Heart right ventricle (tissue), 16 donors: ENCODE measurements at regions of chr3 and their contacts with region 1.

Region 1: DNA sequence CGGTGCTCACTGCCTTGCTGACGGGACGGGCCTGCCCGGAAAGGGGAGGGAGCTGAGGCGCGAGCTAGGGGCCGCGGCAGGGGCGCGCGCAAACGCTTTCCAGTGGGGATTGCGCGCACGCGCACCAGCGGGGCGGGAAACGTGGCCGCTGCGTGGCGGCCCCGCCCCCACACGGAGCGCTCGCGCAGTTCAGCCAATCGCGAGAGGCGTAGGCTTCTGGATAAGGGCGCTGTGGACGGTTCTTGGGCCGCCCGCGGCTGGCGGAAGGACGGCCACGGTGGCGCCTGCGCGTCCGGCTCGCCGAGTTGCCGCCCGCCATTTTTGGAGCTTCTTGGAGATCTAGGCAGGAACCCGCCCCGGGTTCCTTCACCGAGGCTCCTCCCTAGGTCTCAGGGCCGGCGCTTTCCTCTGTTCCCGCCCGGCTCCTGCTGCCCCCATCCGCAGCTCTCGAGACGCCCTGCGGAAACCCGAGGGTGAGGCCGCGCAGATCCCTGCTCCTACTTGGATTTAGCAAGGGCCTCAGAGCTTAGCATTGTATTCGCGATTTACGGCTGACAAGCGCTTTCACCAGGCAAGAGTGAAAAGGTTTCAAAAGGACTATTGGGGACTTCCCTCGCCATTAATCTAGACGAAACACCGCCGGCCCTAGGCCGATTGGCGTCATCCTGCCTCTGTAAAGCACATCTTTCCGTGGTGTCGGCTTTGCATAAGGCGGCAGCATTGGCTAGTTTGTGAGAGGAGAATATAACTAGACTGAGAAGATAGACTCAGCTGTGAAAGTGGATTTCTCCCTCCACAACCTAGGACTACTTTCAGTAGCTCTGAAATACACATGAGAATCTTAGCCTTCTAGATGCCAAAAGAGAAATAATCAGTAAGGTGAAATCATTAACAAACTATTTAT is 496 bp upstream of the STAG1 start:
- DNase-seq: peak; percentile 98 to 99
- ATAC-seq: peak; percentile 94 to 99 (median 96)
- H3K4me3 ChIP-seq: peak overlapping the region; percentile 33 to 94 (median 71)
- H3K27ac ChIP-seq: peak overlapping the region; percentile 96 to 99 (median 98)
- H3K4me1 ChIP-seq: peaks cover 4 to 40% (median 30%) of the 10 kb centered on the region in 9 donors
- H3K27me3 ChIP-seq: no peaks in the 10 kb centered on the region
- CTCF ChIP-seq: peak in 4 of 9 donors; percentile 20 to 54 (median 46)

Region 2: DNA sequence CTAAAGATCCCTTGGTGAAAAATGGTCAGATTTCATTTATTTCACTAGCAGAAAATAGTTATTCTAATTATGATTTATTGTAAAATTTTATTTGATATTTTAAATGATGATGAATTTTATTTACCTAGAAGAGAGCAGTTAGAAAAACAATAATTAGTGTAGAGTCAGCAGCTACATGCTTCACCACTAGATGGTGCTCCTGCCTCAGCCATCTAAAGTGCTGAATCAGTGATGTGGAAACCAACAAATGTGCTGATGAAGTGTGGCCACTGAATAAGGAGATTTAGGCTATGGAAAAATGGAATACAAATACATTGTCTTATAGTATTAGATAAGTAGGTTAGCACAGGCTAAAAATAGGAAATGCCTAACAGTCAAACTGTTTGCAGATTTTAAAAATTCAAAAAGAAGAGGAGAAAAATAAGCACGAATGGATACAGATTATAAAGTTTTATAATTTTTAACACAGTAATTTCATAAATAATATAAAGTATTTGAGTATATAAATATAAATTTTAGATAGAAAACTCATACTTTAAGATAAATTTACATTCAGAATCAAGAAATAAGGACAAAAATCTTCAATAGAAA is 677.4 kb before region 1 on chr3:
- intact Hi-C with region 1: loop called in 9 of 10 experiments (anchors 1 to 10 kb)
- DNase-seq: peak; percentile 30 to 77
- ATAC-seq: peak; percentile 71 to 87 (median 80)
- H3K4me3 ChIP-seq: no peak overlapping the region
- H3K27ac ChIP-seq: peak overlapping the region in 7 of 10 donors; percentile 6 to 54 (median 34)
- H3K4me1 ChIP-seq: peaks cover 2 to 39% (median 20%) of the 10 kb centered on the region in 9 donors
- H3K27me3 ChIP-seq: no peaks in the 10 kb centered on the region
- CTCF ChIP-seq: peak; percentile 84 to 97 (median 92)

Region 3: GRCh38 chr3:136305878-136306277 is 446.8 kb before region 1 on chr3:
- intact Hi-C with region 1: loop called in 1 of 10 experiments (anchors 5 kb)
- DNase-seq: no peak
- ATAC-seq: no peak
- H3K4me3 ChIP-seq: no peak overlapping the region
- H3K27ac ChIP-seq: no peak overlapping the region
- H3K4me1 ChIP-seq: no peaks in the 10 kb centered on the region
- H3K27me3 ChIP-seq: no peaks in the 10 kb centered on the region
- CTCF ChIP-seq: peak in 4 of 9 donors; percentile 22 to 46 (median 28)

Region 4: GRCh38 chr3:136396916-136397315 is 355.8 kb before region 1 on chr3:
- intact Hi-C with region 1: loop called in 5 of 10 experiments (anchors 5 to 10 kb)
- DNase-seq: no peak
- ATAC-seq: no peak
- H3K4me3 ChIP-seq: no peak overlapping the region
- H3K27ac ChIP-seq: no peak overlapping the region
- H3K4me1 ChIP-seq: peaks cover 0 to 3% (median 0%) of the 10 kb centered on the region in 9 donors
- H3K27me3 ChIP-seq: no peaks in the 10 kb centered on the region
- CTCF ChIP-seq: no peak

Region 5: DNA sequence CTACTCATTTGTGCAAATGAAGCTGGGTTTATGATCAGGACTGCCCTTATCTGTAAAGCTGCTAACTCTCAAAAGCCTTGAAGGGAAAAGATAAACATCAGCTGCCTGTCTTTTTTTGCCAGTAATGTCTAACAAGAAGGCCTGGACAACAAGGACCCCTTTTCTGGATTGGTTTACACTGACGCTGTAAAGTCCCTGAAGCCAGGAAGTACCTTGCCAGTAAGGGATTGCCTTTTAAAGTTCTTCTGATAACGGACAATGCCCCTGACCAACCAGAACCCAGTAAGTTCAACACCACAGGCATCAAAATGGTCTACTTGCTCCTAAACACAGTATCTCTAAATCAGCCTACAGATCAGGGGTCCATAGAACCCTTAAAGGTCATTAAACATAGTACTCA is 324.5 kb before region 1 on chr3:
- intact Hi-C with region 1: no loop called
- DNase-seq: no peak
- ATAC-seq: no peak
- H3K4me3 ChIP-seq: no peak overlapping the region
- H3K27ac ChIP-seq: no peak overlapping the region
- H3K4me1 ChIP-seq: no peaks in the 10 kb centered on the region
- H3K27me3 ChIP-seq: no peaks in the 10 kb centered on the region
- CTCF ChIP-seq: no peak

Region 6: GRCh38 chr3:136861890-136862616 is 109.4 kb after region 1 on chr3 and contains the start of gene NCK1:
- intact Hi-C with region 1: loop called in 5 of 10 experiments (anchors 1 to 5 kb)
- DNase-seq: peak; percentile 98 to 99
- ATAC-seq: peak; percentile 98 to 100 (median 99)
- H3K4me3 ChIP-seq: peak within 1 kb of the TSS; percentile 58 to 98 (median 93)
- H3K27ac ChIP-seq: peak within 1 kb of the TSS; percentile 81 to 97 (median 94)
- H3K4me1 ChIP-seq: peaks cover 0 to 60% (median 35%) of the 10 kb centered on the region in 9 donors
- H3K27me3 ChIP-seq: no peaks in the 10 kb centered on the region
- CTCF ChIP-seq: peak in 4 of 9 donors; percentile 21 to 42 (median 31)
- total RNA-seq, gene NCK1: 17.0 to 31.8 (median 23.0) TPM

Region 7: DNA sequence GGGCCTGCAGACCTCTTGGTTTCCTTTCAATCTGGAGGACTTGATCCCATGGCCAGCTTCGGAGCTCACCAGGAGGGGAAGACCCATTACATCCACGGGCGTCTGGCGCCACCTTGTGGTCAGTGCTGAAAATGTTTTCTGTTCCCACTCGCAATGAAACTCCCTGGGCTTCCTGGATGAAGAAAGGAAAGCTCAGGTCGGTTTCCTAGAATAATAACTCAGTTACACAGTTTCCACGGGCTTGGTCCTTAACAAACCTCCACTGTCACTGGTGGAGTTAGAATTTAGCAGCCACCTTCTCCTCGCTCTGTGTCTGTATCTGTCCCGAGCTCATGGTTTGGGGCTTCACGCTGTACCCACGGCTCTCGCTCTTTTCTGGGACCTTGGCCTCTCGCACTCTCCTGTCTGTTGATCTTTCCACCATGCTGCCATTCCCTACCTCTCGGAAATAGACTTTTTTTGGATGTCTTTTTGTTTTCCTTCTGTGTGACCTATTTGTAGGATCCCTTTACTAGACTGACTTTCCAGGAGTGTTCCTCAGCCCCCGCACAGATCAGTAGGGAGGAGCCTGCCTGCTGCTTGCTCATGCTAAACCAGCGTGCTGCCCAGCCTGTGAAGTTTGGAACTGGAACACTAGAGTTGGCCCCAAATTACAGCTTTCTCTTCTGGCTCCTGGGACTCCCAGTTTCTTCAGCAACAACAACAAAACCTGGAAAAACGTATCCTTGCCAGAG is 261.4 kb after region 1 on chr3:
- intact Hi-C with region 1: loop called (anchors 1 to 10 kb)
- DNase-seq: peak; percentile 88 to 91
- ATAC-seq: peak; percentile 94 to 98 (median 96)
- H3K4me3 ChIP-seq: peak overlapping the region in 9 of 10 donors; percentile 30 to 60 (median 57)
- H3K27ac ChIP-seq: peak overlapping the region in 7 of 10 donors; percentile 59 to 77 (median 68)
- H3K4me1 ChIP-seq: peaks cover 0 to 22% (median 5%) of the 10 kb centered on the region in 9 donors
- H3K27me3 ChIP-seq: no peaks in the 10 kb centered on the region
- CTCF ChIP-seq: peak; percentile 86 to 95 (median 93)